HCT116 (cell line): ENCODE measurements at regions of chr1 and their contacts with region 1.

Region 1: DNA sequence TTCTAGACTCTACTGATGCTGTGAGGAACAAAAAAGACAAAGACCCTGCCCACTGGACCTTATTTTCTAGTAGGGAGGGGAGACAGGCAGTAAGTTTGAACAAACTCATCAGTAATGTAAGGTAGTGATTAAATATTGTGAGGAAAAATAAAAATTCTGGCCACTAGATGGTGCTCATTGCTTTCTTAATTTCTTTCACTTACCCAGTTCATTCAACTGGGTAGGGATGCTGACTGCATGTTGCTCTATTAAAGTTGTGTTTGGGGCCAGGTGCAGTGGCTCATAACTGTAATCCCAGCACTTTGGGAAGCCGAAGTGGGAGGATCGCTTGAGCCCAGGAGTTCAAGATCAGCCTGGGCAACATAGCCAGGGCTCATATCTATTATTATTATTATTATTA is 6.3 kb upstream of the KYAT3 start:
- DNase-seq: peak; percentile 49
- ATAC-seq: peak; percentile 95
- H3K4me3 ChIP-seq: no peak overlapping the region
- H3K27ac ChIP-seq: no peak overlapping the region
- H3K4me1 ChIP-seq: peaks cover 0 to 1% of the 10 kb centered on the region in 2 experiments; a peak in 2 of 4 replicates
- H3K27me3 ChIP-seq: no peaks in the 10 kb centered on the region
- CTCF ChIP-seq: peak; percentile 22 to 52 (median 45); a peak in 3 of 6 replicates
- POLR2A ChIP-seq: no peak
- RAD21 ChIP-seq: peak; percentile 75

Region 2: GRCh38 chr1:89085781-89086180 is 87.1 kb after region 1 on chr1:
- CTCF ChIA-PET with region 1: interaction called, 12 read pairs
- POLR2A ChIA-PET with region 1: no interaction called
- RAD21 ChIA-PET with region 1: interaction called in 1 of 2 experiments, 4 read pairs
- intact Hi-C with region 1: loop called (anchors 2 kb)
- DNase-seq: peak; percentile 40
- ATAC-seq: peak; percentile 78
- H3K4me3 ChIP-seq: no peak overlapping the region
- H3K27ac ChIP-seq: no peak overlapping the region
- H3K4me1 ChIP-seq: no peaks in the 10 kb centered on the region
- H3K27me3 ChIP-seq: no peaks in the 10 kb centered on the region
- CTCF ChIP-seq: peak; percentile 74 to 84 (median 82)
- POLR2A ChIP-seq: no peak
- RAD21 ChIP-seq: peak; percentile 88

Region 3: DNA sequence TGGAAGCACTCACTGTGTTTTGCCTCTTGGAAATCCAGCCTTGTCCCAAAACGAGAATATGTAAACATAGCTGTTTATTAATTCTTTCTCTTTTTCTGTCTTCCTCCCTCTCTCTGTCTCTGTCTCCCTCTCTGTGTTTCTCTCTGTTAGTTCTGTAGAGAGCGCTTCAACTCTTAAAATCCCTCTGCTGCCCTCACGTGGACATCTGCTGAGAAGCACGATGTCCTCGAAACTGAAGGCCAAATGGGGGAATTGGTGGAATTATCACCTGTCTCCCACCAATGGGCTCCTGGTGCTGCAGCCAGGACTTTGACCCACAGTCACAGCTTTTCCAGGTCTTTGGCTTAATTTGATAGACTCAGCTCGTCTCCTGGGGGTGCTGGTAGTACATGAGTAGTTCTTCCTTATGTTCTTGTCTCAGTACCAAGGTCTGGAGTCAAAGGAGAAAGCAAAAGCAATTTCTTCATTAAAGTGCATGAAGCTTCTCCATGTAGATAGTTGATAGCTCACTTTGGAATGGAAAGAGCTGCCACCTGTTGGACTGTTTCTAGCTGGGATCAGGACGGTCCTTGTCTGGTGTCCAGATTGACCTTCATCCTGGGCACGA is 359.7 kb after region 1 on chr1:
- CTCF ChIA-PET with region 1: interaction called, 13 read pairs
- POLR2A ChIA-PET with region 1: no interaction called
- RAD21 ChIA-PET with region 1: no interaction called
- intact Hi-C with region 1: loop called (anchors 1 kb)
- DNase-seq: peak; percentile 63
- ATAC-seq: peak; percentile 96
- H3K4me3 ChIP-seq: no peak overlapping the region
- H3K27ac ChIP-seq: no peak overlapping the region
- H3K4me1 ChIP-seq: no peaks in the 10 kb centered on the region
- H3K27me3 ChIP-seq: no peaks in the 10 kb centered on the region
- CTCF ChIP-seq: peak; percentile 65 to 90 (median 81)
- POLR2A ChIP-seq: no peak
- RAD21 ChIP-seq: peak; percentile 88

Region 4: DNA sequence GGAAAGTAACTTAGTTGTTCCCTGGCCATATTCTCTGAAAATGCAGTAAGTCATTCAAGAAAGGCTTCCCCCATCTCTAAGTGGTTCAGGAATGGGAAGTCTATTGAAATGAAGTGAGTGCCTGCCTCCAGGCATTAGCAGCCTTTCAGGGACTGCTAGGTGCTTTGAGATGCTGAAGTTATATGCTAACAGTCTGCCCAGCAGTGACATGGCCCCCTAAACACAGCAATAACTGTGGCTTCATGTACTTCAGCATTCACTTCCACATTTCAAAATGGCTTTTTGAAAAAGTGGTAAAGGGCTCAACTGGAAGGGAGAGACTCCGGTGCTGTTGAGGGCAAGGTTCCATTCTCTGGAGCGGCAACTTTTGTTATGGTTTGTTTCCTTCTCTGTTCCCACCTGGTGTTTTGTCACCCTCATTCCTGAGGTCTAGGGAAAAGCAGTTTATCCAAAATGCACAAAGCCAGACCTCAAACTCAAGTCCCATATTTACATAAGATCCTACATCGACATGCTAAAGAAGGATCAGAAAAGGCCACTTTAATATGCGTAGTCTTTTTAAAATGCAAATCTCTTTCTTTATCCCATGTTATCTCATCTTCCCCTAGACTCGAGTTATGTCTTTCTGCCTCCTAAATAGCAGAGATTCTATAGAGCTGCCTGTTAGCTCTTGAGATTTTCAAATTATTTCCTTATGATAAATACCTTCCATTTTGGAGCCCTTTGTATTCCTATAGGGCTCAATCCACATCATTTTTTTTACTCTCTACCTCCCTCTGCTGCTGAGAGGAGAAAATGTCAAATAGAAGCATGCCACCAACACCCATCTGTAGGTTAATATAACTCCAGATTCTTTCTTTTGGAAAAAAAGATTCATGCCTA is 600.0 kb after region 1 on chr1:
- CTCF ChIA-PET with region 1: no interaction called
- POLR2A ChIA-PET with region 1: no interaction called
- RAD21 ChIA-PET with region 1: no interaction called
- intact Hi-C with region 1: loop called (anchors 5 kb)
- DNase-seq: peak; percentile 26
- ATAC-seq: peak; percentile 96
- H3K4me3 ChIP-seq: no peak overlapping the region
- H3K27ac ChIP-seq: no peak overlapping the region
- H3K4me1 ChIP-seq: no peaks in the 10 kb centered on the region
- H3K27me3 ChIP-seq: no peaks in the 10 kb centered on the region
- CTCF ChIP-seq: peak; percentile 56 to 68 (median 66); a peak in 5 of 6 replicates
- POLR2A ChIP-seq: no peak
- RAD21 ChIP-seq: peak; percentile 71

Region 5: GRCh38 chr1:89762779-89763648 is 764.3 kb after region 1 on chr1:
- CTCF ChIA-PET with region 1: interaction called, 5 read pairs
- POLR2A ChIA-PET with region 1: no interaction called
- RAD21 ChIA-PET with region 1: no interaction called
- intact Hi-C with region 1: loop called (anchors 2 kb)
- DNase-seq: peak; percentile 28
- ATAC-seq: peak; percentile 100
- H3K4me3 ChIP-seq: no peak overlapping the region; a peak in 1 of 4 replicates
- H3K27ac ChIP-seq: no peak overlapping the region
- H3K4me1 ChIP-seq: peaks cover 0 to 8% of the 10 kb centered on the region in 2 experiments; a peak in 1 of 4 replicates
- H3K27me3 ChIP-seq: no peaks in the 10 kb centered on the region
- CTCF ChIP-seq: peak; percentile 88 to 95 (median 94)
- POLR2A ChIP-seq: no peak
- RAD21 ChIP-seq: peak; percentile 95